ENCODE measurements at regions of chr1 and their contacts with region 1.

Region 1: GRCh38 chr1:205227584-205228006 is at the start of gene TMCC2:
- DNase-seq: peak; percentile 39 to 92
- H3K4me3 ChIP-seq: peak within 1 kb of the TSS; percentile 40 to 86
- H3K27ac ChIP-seq: peak within 1 kb of the TSS in 1 of 2 donors; percentile 65
- H3K4me1 ChIP-seq: peaks cover 0 to 20% of the 10 kb centered on the region in 2 donors
- H3K27me3 ChIP-seq: no peaks in the 10 kb centered on the region
- CTCF ChIP-seq: no peak
- total RNA-seq, gene TMCC2: 5.2 TPM

Region 2: DNA sequence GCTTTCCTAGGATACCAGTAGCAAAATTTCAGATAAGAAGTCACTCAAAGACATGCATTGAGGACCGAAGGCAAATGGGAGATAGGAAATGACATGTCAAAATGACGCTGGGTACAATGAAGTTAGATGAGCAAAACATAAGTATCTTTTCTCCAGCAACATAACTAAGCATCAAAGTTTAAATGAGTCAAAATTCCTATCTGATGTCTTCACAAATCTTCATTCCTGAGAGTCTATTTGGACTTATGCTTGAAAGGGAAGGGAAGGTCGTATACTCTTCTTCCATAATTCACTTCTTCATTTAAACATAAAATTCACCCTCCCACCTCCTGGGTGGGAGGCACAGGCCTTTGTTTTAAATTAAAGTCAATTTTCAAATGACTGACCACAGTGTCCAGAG is 139.3 kb before region 1 on chr1:
- intact Hi-C with region 1: no loop called
- DNase-seq: no peak
- H3K4me3 ChIP-seq: no peak overlapping the region
- H3K27ac ChIP-seq: no peak overlapping the region
- H3K4me1 ChIP-seq: no peaks in the 10 kb centered on the region
- H3K27me3 ChIP-seq: no peaks in the 10 kb centered on the region
- CTCF ChIP-seq: no peak

Region 3: DNA sequence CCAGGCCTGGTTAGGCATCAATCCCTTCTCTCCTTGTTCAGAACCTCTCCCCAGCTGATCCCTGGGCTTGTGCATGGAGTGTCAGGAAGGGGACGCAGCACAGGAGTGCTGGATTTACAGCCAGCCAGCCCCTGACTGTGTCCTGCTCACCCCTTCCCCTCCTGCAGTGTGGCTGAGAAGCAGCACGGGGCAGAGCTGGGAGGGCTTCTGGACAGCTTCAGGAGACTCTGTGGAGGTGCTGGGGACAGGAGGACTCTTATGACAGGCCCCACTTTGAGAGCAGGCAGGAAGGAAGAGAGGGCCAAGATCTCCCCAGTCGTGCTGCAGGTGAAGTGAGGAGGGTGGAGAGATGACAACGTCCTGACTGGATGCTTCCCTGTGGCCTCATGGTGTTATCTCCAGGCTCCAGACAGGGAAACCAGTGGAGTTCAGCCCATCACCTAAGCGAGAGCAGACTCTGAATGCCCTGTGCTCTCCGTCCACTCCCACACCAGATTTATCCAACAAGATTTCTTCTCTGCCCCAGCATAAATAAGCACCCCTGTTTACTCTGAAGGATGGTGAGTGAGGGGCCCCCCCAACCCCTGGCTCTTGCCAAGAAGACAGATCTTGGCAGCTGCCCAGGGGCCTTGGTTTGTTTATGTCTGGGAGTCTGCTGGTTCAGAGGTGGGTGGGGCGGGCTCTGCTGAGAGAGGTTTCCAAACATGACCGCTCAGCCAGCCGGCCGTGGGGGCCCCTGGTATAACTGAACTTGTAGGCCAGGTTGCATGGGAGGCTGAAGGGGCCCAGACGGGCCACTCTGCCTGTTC is 21.4 kb after region 1 on chr1:
- intact Hi-C with region 1: loop called (anchors 1 kb)
- DNase-seq: peak; percentile 37 to 82
- H3K4me3 ChIP-seq: no peak overlapping the region
- H3K27ac ChIP-seq: peak overlapping the region; percentile 78 to 84
- H3K4me1 ChIP-seq: peaks cover 25 to 44% of the 10 kb centered on the region in 2 donors
- H3K27me3 ChIP-seq: no peaks in the 10 kb centered on the region
- CTCF ChIP-seq: no peak